Panc1 (cell line): ENCODE measurements at regions of chr6 and their contacts with region 1.

Region 1: DNA sequence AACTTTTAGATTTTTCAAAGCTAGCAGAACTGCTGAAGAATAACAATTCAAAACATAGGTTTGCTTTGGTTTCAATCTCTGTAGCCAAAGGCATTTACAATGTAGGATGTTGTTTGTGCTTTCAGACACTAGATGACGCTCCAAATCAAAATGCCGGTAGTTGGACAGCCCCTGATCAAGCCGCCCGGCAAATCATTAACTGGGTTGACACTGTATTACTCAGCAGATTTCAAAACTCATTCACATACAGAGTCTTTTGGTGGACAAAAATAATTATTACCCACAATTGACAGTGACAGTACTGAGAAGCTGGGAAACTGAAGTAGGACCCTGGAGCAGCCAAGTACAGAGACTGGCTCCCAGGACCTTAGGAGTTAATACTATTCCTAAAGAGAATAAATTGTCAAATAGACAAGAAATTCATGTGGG is 21.3 kb upstream of the HFE start:
- DNase-seq: no peak
- ATAC-seq: peak; percentile 94
- H3K4me3 ChIP-seq: peak overlapping the region; percentile 37 to 57
- H3K27ac ChIP-seq: peak overlapping the region; percentile 73
- H3K4me1 ChIP-seq: no peaks in the 10 kb centered on the region
- H3K27me3 ChIP-seq: no peaks in the 10 kb centered on the region
- CTCF ChIP-seq: peak; percentile 94

Region 2: DNA sequence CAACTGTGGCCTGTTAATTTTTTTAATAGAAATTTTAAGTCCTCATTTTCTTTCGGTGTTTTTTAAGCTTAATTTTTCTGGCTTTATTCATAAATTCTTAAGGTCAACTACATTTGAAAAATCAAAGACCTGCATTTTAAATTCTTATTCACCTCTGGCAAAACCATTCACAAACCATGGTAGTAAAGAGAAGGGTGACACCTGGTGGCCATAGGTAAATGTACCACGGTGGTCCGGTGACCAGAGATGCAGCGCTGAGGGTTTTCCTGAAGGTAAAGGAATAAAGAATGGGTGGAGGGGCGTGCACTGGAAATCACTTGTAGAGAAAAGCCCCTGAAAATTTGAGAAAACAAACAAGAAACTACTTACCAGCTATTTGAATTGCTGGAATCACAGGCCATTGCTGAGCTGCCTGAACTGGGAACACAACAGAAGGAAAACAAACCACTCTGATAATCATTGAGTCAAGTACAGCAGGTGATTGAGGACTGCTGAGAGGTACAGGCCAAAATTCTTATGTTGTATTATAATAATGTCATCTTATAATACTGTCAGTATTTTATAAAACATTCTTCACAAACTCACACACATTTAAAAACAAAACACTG is 31.4 kb after region 1 on chr6:
- CTCF ChIA-PET with region 1: interaction called, 4 read pairs
- POLR2A ChIA-PET with region 1: no interaction called
- in situ Hi-C with region 1: loop called (anchors 5 kb)
- intact Hi-C with region 1: loop called (anchors 1 kb)
- DNase-seq: no peak
- ATAC-seq: peak; percentile 95
- H3K4me3 ChIP-seq: no peak overlapping the region
- H3K27ac ChIP-seq: no peak overlapping the region
- H3K4me1 ChIP-seq: no peaks in the 10 kb centered on the region; the same call in 1 of the 2 replicates
- H3K27me3 ChIP-seq: no peaks in the 10 kb centered on the region
- CTCF ChIP-seq: peak; percentile 82